ENCODE measurements at regions of chr1 and their contacts with region 1.

Region 1: DNA sequence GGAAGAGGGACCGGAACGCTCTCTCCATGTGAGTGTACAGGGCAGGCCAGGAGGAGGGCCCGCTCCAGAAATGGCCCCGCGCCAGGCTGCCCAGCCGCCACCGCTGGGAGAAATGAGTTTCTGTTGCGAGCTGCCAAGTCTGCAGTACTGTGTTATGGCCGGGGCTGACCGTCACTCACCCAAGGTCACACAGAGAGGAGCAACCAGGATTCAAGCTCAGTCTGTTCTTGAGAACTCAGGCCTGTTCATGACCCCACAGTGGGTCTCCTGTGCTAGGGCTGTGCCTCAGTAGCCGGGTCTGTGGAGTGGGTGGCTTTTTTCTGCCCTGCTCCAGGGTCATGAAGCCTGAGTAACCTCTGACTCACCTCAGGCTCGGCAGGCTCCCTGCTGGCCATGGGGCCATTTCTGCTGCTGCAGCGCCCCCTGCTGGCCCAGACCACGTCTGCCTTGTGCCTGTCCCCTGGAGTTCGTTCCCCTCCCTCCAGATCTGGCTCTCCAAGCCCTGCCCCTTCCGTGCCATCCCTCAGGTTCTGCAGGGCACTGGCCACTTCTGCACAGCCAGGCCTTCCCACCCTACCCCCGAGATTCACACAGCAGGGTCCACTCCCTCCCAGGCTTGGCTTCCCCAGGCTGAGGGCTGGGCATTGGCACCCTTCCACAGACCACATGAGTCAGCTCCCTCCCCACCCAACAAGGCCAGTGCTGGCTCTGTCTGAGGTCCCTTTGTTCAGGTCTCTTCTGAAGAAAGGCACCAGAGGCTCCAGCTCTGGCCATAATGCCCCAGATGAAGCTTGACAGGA is 51.8 kb downstream of the EDN2 start:
- DNase-seq: peak; percentile 86 to 87
- ATAC-seq: peak; percentile 89 to 96 (median 91)
- H3K4me3 ChIP-seq: peak overlapping the region in 1 of 10 donors; percentile 1
- H3K27ac ChIP-seq: peak overlapping the region; percentile 48 to 90 (median 80)
- H3K4me1 ChIP-seq: peaks cover 16 to 40% (median 30%) of the 10 kb centered on the region in 9 donors
- H3K27me3 ChIP-seq: peaks cover 0 to 18% (median 6%) of the 10 kb centered on the region in 7 donors
- CTCF ChIP-seq: peak; percentile 83 to 98 (median 94)

Region 2: DNA sequence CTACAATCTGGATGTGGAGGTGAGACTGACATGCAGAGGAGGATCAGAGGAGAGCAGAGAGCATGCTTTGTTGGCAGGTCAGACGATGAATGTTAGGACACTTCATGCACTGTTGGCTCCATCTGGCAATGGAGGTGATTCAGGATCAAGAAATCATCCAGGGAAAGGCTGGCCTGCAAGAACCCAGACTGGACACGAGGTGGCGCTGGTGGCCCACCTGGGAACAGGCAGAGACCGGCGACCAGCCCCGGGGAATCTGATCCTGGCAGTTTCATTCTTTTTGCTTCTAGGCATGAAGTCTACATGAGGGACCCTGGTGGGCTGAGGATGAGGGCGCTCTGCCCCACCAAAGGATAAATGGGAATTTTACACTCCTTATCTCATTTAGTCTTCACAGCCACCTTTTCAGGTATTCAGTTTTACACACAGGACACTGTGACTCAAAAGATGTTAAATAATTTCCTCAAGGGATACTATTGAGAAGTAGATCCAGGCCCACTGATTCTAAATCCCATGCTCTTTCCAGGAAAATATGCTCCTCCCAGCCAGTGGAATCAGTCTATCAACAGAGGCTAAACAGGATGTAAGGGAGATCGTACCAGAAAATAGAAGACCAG is 164.4 kb before region 1 on chr1:
- intact Hi-C with region 1: loop called in 6 of 10 experiments (anchors 1 to 5 kb)
- DNase-seq: peak; percentile 68 to 73
- ATAC-seq: peak; percentile 65 to 89 (median 84)
- H3K4me3 ChIP-seq: no peak overlapping the region
- H3K27ac ChIP-seq: no peak overlapping the region
- H3K4me1 ChIP-seq: peaks cover 0 to 5% (median 4%) of the 10 kb centered on the region in 9 donors
- H3K27me3 ChIP-seq: peaks cover 0 to 3% (median 0%) of the 10 kb centered on the region in 7 donors
- CTCF ChIP-seq: peak; percentile 96 to 100 (median 98)

Region 3: DNA sequence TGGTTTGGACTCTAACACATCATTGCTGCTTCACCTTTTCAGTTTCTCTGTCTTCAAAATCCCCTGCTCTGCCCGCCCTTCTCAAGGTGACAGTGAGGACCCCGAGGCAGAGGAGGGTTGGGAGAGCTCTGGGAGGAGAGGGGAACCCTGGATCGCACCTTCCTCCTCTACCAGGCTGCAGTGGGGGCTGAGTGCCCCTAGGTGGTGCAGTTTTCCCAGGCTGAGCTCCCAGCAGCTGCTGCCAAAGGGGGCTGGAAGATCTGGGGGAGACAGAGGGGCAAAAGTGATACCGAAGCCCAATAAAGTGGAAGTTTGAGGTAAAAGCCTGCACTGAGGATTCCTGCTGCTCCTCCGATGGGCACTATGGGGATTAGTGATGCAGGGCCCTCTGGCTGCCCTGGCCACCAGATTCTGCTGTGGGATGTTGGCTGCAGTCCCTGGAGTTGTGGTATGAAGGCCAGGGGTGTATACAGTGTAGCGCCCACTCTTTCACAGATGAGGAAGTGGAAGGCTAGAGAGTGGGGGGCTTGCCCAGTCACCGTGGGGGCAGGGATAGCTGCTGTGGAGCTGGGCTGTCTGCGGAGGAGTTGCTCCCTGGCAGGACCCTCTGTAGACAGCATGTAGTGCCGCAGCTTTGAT is 149.9 kb before region 1 on chr1:
- intact Hi-C with region 1: loop called in 2 of 10 experiments (anchors 5 kb)
- DNase-seq: peak; percentile 27 to 44
- ATAC-seq: peak; percentile 40 to 74 (median 65)
- H3K4me3 ChIP-seq: no peak overlapping the region
- H3K27ac ChIP-seq: no peak overlapping the region
- H3K4me1 ChIP-seq: peaks cover 0 to 9% (median 0%) of the 10 kb centered on the region in 9 donors
- H3K27me3 ChIP-seq: peaks cover 0 to 19% (median 5%) of the 10 kb centered on the region in 7 donors
- CTCF ChIP-seq: peak; percentile 47 to 85 (median 79)

Region 4: DNA sequence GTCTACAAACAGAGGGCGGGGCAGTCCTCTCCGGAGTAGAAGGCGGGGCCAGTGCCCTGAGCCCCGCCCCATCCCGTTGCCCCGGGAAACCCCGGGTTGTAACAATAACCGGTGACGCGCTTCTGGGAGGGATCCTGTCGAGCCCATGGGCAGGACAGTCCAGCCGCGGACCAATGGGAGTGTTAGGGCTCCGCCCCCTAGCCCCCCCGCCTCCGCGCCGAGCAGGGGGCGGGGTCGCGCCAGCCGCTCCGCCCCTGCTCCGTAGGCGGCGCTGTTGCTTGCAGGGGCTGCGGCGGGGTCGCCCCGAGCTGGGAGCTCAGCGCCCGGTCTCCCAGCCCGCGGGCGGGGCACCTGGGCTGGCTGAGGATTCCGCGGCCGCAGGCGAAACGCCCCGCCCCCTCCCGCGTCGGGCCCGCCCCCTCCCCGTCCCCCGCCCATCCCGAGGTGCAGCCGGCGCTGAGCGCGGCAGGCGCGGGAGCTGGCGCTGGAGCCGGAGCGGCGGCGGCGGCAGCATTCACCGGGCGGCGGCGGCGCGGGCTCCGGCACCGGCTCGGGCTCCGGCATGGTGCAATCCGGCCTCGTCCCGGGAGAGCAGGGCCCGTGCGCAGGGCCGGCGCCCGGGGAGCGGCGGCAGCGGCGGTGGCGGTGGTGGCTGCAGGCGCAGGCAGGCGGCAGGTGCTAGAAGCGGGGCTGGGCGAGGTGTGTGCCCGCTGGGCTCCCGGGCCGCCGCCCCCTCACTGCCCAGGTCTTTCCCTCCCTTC is 71.5 kb before region 1 on chr1 and contains the start of gene FOXO6:
- intact Hi-C with region 1: loop called in 1 of 10 experiments (anchors 5 kb)
- DNase-seq: peak; percentile 98
- ATAC-seq: peak; percentile 90 to 98 (median 95)
- H3K4me3 ChIP-seq: peak within 1 kb of the TSS; percentile 52 to 82 (median 64)
- H3K27ac ChIP-seq: peak within 1 kb of the TSS in 6 of 10 donors; percentile 40 to 69 (median 57)
- H3K4me1 ChIP-seq: peaks cover 19 to 75% (median 44%) of the 10 kb centered on the region in 9 donors
- H3K27me3 ChIP-seq: peaks cover 0 to 57% (median 18%) of the 10 kb centered on the region in 7 donors
- CTCF ChIP-seq: peak; percentile 12 to 77 (median 60)
- total RNA-seq, gene FOXO6: 0.30 to 2.6 (median 1.4) TPM

Region 5: DNA sequence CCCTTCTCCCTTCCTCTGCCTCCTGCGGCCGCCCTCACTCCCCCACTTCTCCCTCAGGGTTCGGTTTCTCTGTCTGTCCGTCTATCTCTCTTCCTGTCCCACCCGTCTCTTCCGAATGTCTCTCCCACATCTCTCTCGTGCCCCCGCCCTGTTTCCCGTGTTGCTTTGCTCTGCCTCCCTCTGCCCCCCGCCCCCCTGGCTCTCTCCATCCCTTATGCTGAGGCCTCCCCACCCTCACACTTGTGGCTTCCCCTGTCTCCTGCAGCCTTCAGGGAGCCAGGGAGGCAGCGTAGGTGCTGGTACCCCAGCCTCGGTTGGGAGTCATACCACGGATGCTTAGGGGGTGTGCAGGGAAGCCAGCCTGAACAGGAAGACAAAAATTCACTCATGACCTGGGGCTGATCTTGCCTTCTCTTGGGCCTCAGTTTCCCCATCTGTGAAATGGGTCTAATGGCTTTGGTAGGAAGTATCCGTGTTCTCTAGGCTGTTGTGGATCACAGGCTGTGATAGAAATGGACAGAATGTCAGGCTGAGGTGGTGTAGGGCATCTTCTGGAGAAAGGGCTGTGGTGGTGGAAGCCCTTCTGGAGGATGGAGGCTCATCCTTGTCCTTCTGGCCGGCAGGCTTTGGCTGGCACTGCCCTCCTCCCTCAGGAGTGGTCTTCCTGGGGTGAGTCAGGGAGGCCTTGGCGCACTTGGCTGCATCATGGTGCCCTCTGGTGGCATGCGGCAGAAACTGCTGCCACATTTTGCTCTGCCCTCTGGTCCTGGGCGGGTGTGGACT is 15.9 kb before region 1 on chr1:
- intact Hi-C with region 1: loop called in 1 of 10 experiments (anchors 1 kb)
- DNase-seq: peak; percentile 48 to 69
- ATAC-seq: peak; percentile 50 to 73 (median 58)
- H3K4me3 ChIP-seq: no peak overlapping the region
- H3K27ac ChIP-seq: no peak overlapping the region
- H3K4me1 ChIP-seq: peaks cover 6 to 30% (median 15%) of the 10 kb centered on the region in 9 donors
- H3K27me3 ChIP-seq: no peaks in the 10 kb centered on the region
- CTCF ChIP-seq: peak; percentile 88 to 96 (median 92)

Region 6: DNA sequence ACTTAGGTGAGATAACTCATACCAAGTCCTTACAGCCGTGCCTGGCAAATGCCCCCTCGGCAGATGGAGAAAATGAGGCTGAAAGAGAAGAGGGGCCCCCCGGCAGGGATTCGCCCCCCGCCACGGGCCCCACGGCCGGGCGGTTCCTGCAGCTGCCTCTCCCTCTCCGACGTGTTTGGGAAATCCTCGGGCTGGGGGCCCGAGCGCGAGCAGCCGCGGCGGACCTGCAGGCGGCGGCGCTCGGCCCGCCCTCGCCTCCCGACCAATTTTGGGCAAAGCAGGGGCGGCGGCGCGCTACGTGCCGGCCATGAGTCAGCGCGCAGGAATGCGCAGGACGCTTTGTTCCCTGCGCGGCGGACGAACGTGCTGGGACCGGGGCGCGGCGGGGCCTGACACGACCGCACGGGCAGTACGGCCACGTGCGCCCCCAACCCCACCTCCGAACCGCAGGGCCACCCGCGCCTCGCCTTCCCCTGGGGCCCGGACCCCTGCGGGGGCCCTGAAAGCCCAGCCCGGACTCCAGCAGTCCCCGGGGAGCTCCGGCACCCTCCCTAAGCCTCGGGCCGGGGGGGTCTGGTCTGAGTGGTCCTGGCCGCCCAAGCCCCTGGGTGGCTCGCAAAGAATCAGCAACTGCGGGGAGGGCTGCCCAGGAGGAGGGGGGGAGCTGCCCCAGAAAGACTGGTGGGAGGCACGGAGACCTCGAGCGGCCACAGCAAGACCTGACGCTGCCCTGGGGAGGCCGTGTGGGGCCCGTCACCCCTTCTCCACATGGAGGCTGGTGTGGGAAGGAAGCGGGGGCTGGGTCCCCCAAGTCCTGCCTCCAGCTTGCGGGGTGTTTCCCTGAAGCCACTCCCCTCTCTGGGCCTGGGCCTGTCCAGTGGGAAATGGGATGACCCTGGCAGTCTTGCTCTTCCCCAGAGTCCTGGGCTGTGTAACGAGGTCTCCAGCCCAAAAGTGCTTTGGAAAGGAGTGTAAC is 63.7 kb after region 1 on chr1:
- intact Hi-C with region 1: loop called in 1 of 10 experiments (anchors 10 kb)
- DNase-seq: peak; percentile 84 to 90
- ATAC-seq: peak; percentile 74 to 87 (median 84)
- H3K4me3 ChIP-seq: peak overlapping the region in 9 of 10 donors; percentile 9 to 54 (median 44)
- H3K27ac ChIP-seq: peak overlapping the region; percentile 77 to 97 (median 92)
- H3K4me1 ChIP-seq: peaks cover 17 to 64% (median 44%) of the 10 kb centered on the region in 9 donors
- H3K27me3 ChIP-seq: peaks cover 0 to 17% (median 0%) of the 10 kb centered on the region in 7 donors
- CTCF ChIP-seq: peak in 4 of 9 donors; percentile 7 to 41 (median 26)

Region 7: DNA sequence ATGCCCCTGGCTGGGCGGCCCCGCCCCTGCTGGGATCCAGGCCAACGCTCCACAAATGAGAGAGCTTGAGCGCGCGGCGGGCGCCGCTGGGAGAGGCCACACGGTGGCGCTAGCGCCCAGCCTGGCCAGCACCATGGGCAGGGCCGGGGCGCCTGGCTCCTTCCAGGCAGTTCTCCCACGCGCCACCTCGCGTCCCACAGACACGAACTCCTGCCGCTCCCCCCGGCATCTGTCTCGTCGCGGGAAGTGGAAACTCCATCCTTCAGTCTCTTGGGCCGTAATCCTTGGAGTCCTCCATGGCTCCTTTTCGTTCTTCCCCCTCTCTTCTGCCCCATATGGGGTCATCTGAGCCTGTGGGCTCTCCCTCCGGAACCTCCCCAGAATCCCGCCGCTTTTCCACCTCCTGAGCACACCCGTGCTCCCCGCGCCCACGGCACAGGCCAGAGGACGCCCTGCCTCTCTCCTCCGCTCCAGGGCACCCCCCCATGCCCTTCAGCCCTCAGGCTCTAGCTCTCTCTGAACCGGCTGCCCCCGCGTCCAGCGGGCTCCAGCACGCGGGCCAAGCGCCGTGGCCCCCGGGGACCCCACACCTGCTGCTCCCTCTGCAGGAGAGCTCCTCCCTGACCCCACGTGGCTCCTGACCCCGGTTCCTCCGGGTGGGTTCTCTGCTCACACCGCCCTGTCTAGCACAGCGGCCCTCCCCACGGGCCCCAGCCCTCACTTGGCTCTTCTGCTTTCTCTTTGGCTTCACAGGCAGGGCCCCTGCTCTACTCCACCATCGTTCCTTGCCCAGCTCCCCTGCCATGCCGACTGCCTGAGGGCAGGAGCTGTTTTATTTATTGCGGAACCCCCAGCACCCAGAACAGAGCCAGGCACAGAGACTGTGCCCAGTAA is 83.7 kb after region 1 on chr1:
- intact Hi-C with region 1: loop called in 1 of 10 experiments (anchors 5 kb)
- DNase-seq: peak; percentile 91 to 94
- ATAC-seq: peak; percentile 94 to 98 (median 96)
- H3K4me3 ChIP-seq: peak overlapping the region; percentile 26 to 58 (median 50)
- H3K27ac ChIP-seq: peak overlapping the region in 5 of 10 donors; percentile 15 to 48 (median 21)
- H3K4me1 ChIP-seq: peaks cover 16 to 38% (median 22%) of the 10 kb centered on the region in 9 donors
- H3K27me3 ChIP-seq: no peaks in the 10 kb centered on the region
- CTCF ChIP-seq: peak; percentile 90 to 97 (median 92)